ENCODE measurements at regions of chr9 and their contacts with region 1.

Region 1: GRCh38 chr9:116494815-116495634 is 192.1 kb upstream of the TRIM32 start:
- ATAC-seq: peak in 2 of 8 experiments; percentile 20 to 37
- H3K4me3 ChIP-seq: no peak overlapping the region
- H3K27ac ChIP-seq: no peak overlapping the region
- H3K4me1 ChIP-seq: peaks cover 9 to 14% of the 10 kb centered on the region in 2 donors

Region 2: GRCh38 chr9:116163293-116164055 is 331.6 kb before region 1 on chr9:
- in situ Hi-C with region 1: no loop called
- ATAC-seq: peak in 1 of 8 experiments; percentile 8
- H3K4me3 ChIP-seq: no peak overlapping the region
- H3K27ac ChIP-seq: no peak overlapping the region
- H3K4me1 ChIP-seq: no peaks in the 10 kb centered on the region

Region 3: DNA sequence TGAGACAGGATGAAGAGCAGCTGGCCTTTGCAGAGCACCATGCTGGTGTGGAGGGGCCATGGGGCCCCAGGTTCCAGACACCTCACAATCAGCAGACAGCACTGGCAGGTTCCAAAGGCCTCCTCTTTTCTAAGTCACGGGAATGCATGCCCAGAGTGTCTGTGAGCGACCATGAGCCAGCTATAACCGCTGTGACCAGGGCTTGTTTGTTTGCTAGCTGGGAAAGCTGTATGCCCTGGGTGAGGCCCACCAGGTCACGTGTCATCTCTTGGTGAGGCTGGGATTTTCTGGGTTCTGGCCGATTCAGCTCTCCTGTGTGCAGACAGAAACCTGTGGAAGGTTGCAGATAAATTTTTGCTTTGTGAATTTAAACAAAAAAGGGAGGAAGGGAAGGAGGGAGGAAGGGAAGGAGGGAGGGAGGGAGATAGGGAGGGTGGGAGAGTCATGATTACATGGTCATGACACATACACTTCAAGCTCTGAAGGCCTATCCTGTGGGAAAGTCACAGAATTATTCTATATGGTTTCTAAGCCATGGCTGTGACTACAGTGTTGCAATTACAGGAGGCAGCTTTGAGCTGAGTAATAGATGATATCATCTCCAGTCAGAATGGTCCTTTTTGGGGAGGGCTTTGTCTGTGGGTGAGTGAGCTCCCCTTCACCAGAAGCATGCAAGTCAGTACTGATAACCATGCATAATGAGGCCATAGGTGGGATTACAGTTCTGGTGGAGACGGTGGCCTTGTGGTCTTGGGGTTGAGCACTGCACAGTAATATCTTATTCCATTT is 304.2 kb before region 1 on chr9:
- in situ Hi-C with region 1: loop called in 1 of 9 experiments (anchors 25 kb)
- ATAC-seq: peak in 7 of 8 experiments; percentile 37 to 93 (median 68)
- H3K4me3 ChIP-seq: no peak overlapping the region
- H3K27ac ChIP-seq: no peak overlapping the region
- H3K4me1 ChIP-seq: no peaks in the 10 kb centered on the region

Region 4: DNA sequence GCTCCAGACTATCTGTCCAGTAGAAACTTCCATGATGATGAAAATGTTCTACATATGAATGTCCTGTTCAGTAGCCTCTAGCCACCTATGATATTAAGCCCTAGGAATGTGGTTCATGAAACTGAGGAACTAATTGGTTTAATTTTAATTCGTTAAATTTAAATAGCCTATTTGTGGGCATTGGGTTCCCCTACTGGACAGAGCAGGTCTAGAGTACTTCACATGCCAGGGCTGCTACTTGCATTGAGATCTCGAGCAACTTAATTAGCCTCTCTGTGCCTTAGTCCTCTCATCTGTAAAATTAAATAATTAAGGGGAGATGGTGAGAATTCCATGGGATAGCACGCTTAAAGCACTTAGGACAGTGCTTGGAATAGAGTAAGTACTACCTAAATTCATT is 181.4 kb before region 1 on chr9:
- in situ Hi-C with region 1: no loop called
- ATAC-seq: peak in 1 of 8 experiments; percentile 16
- H3K4me3 ChIP-seq: no peak overlapping the region
- H3K27ac ChIP-seq: no peak overlapping the region
- H3K4me1 ChIP-seq: peaks cover 3 to 4% of the 10 kb centered on the region in 2 donors

Region 5: GRCh38 chr9:116566677-116567488 is 71.9 kb after region 1 on chr9:
- in situ Hi-C with region 1: loop called in 1 of 9 experiments (anchors 10 kb)
- ATAC-seq: peak in 3 of 8 experiments; percentile 30 to 66 (median 56)
- H3K4me3 ChIP-seq: no peak overlapping the region
- H3K27ac ChIP-seq: no peak overlapping the region
- H3K4me1 ChIP-seq: peaks cover 15 to 21% of the 10 kb centered on the region in 2 donors

Measured in motor neuron (in vitro differentiated cells).